CD8-positive, alpha-beta T cell (primary cell): ENCODE measurements at regions of chr12 and their contacts with region 1.

Region 1: GRCh38 chr12:95918194-95918993 is 24.0 kb downstream of the CCDC38 start:
- DNase-seq: peak in 8 of 9 experiments; percentile 3 to 77 (median 45)
- ATAC-seq: peak; percentile 99
- H3K4me3 ChIP-seq: no peak overlapping the region
- H3K4me3 Mint-ChIP-seq: no peak overlapping the region
- H3K27ac ChIP-seq: no peak overlapping the region
- H3K27ac Mint-ChIP-seq: no peak overlapping the region
- H3K4me1 ChIP-seq: no peaks in the 10 kb centered on the region
- H3K4me1 Mint-ChIP-seq: no peaks in the 10 kb centered on the region
- H3K27me3 ChIP-seq: no peaks in the 10 kb centered on the region
- H3K27me3 Mint-ChIP-seq: no peaks in the 10 kb centered on the region
- CTCF ChIP-seq: peak; percentile 81

Region 2: DNA sequence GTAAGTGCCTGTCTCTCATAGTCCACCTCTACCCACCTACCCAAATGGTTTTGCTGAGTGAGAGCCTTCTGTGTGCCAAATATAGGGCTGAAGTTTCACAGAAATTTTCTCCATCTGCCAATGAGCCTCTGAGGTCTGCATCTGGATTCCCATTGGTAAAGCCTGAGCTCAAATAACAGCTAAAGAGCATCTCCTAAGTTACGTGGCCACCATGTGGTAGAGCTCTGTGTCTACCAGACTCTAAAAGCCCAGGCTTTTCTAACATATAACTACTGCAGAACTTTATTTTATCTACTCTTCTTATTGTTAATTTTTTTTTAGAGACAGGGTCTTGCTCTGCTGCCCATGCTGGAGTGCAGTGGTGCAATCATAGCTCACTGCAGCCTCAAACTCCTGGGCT is 40.7 kb after region 1 on chr12:
- CTCF ChIA-PET with region 1: interaction called, 20 read pairs
- POLR2A ChIA-PET with region 1: no interaction called
- intact Hi-C with region 1: loop called in 1 of 2 experiments (anchors 2 kb)
- DNase-seq: peak in 2 of 9 experiments; percentile 8 to 11
- ATAC-seq: no peak
- H3K4me3 ChIP-seq: no peak overlapping the region
- H3K4me3 Mint-ChIP-seq: no peak overlapping the region
- H3K27ac ChIP-seq: no peak overlapping the region
- H3K27ac Mint-ChIP-seq: no peak overlapping the region
- H3K4me1 ChIP-seq: no peaks in the 10 kb centered on the region
- H3K4me1 Mint-ChIP-seq: no peaks in the 10 kb centered on the region
- H3K27me3 ChIP-seq: no peaks in the 10 kb centered on the region
- H3K27me3 Mint-ChIP-seq: no peaks in the 10 kb centered on the region
- CTCF ChIP-seq: no peak

Region 3: GRCh38 chr12:95976416-95976832 is 58.0 kb after region 1 on chr12:
- CTCF ChIA-PET with region 1: no interaction called
- POLR2A ChIA-PET with region 1: no interaction called
- intact Hi-C with region 1: no loop called
- DNase-seq: no peak
- ATAC-seq: no peak
- H3K4me3 ChIP-seq: no peak overlapping the region
- H3K4me3 Mint-ChIP-seq: no peak overlapping the region
- H3K27ac ChIP-seq: no peak overlapping the region
- H3K27ac Mint-ChIP-seq: no peak overlapping the region
- H3K4me1 ChIP-seq: no peaks in the 10 kb centered on the region
- H3K4me1 Mint-ChIP-seq: no peaks in the 10 kb centered on the region
- H3K27me3 ChIP-seq: no peaks in the 10 kb centered on the region
- H3K27me3 Mint-ChIP-seq: no peaks in the 10 kb centered on the region
- CTCF ChIP-seq: no peak

Region 4: DNA sequence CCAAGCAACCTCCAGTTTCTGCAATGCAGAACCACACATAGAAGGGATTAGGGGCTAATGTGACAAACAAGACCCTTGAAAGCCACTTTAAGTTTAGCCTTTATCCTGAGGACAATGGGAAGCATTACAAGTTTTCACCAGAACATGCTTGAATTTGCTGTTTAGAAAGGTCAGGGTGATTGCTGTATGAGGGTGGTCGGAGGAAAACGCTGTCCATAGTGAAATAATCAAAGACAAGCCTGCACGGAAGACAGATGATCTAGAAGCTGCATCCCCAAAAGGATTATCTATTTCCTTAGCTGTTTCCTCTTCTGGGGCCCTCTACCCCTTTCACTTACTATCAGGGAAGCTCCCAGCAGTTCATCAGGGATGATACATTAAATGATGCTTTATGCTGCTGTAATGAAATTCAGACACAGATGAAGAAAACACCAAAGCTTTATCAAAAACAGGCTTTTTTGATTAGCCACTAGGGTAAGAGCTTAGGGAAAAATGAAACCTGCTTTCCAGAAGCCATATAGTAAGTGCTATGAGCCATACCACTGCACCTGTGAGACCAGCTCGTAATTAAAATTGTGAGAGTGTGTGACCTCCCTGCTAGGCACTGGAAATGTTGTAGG is 71.2 kb after region 1 on chr12:
- CTCF ChIA-PET with region 1: interaction called, 105 read pairs
- POLR2A ChIA-PET with region 1: no interaction called
- intact Hi-C with region 1: no loop called
- DNase-seq: no peak
- ATAC-seq: no peak
- H3K4me3 ChIP-seq: no peak overlapping the region
- H3K4me3 Mint-ChIP-seq: no peak overlapping the region
- H3K27ac ChIP-seq: no peak overlapping the region
- H3K27ac Mint-ChIP-seq: no peak overlapping the region
- H3K4me1 ChIP-seq: no peaks in the 10 kb centered on the region
- H3K4me1 Mint-ChIP-seq: no peaks in the 10 kb centered on the region
- H3K27me3 ChIP-seq: no peaks in the 10 kb centered on the region
- H3K27me3 Mint-ChIP-seq: no peaks in the 10 kb centered on the region
- CTCF ChIP-seq: no peak

Region 5: GRCh38 chr12:96383991-96384390 is 465.6 kb after region 1 on chr12:
- CTCF ChIA-PET with region 1: no interaction called
- POLR2A ChIA-PET with region 1: no interaction called
- intact Hi-C with region 1: no loop called
- DNase-seq: no peak
- ATAC-seq: no peak
- H3K4me3 ChIP-seq: no peak overlapping the region
- H3K4me3 Mint-ChIP-seq: no peak overlapping the region
- H3K27ac ChIP-seq: no peak overlapping the region
- H3K27ac Mint-ChIP-seq: no peak overlapping the region
- H3K4me1 ChIP-seq: peaks cover 26% of the 10 kb centered on the region
- H3K4me1 Mint-ChIP-seq: peaks cover 81% of the 10 kb centered on the region
- H3K27me3 ChIP-seq: no peaks in the 10 kb centered on the region
- H3K27me3 Mint-ChIP-seq: no peaks in the 10 kb centered on the region
- CTCF ChIP-seq: no peak

Region 6: DNA sequence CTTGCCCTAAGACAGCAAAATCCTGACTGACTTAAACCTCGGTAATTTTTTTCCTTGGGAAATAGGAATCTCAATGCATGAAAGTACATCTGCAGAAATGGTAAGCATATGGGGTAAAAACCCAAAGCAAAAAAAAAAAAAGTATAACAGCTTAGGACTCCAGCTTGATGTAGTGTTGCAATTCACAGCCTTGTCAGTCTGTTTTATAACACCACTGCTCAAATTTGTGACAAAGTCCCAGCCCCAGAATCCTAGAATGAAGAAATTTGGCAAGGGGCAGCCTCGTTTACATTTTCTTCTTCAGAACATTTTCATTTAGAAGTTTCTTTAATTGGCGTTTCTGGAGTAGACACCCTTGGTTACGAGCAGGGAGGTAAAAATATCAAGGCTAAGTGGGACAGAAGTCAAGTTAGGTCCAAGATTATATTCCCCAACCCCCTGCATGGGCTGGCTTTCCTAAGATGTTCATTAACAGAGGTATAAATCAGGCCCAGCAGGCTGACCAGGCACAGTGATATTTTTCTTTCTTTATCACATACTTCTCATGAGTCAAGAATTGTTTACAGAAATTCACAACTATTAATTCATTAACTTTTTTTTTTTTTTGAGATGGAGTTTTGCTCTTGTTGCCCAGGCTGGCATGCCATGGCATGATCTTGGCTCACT is 1968.2 kb after region 1 on chr12:
- CTCF ChIA-PET with region 1: no interaction called
- POLR2A ChIA-PET with region 1: no interaction called
- intact Hi-C with region 1: no loop called
- DNase-seq: no peak
- ATAC-seq: no peak
- H3K4me3 ChIP-seq: no peak overlapping the region
- H3K4me3 Mint-ChIP-seq: no peak overlapping the region
- H3K27ac ChIP-seq: no peak overlapping the region
- H3K27ac Mint-ChIP-seq: no peak overlapping the region
- H3K4me1 ChIP-seq: no peaks in the 10 kb centered on the region
- H3K4me1 Mint-ChIP-seq: no peaks in the 10 kb centered on the region
- H3K27me3 ChIP-seq: no peaks in the 10 kb centered on the region
- H3K27me3 Mint-ChIP-seq: no peaks in the 10 kb centered on the region
- CTCF ChIP-seq: no peak